Endothelial cell of umbilical vein (primary cell): ENCODE measurements at regions of chr4 and their contacts with region 1.

Region 1: DNA sequence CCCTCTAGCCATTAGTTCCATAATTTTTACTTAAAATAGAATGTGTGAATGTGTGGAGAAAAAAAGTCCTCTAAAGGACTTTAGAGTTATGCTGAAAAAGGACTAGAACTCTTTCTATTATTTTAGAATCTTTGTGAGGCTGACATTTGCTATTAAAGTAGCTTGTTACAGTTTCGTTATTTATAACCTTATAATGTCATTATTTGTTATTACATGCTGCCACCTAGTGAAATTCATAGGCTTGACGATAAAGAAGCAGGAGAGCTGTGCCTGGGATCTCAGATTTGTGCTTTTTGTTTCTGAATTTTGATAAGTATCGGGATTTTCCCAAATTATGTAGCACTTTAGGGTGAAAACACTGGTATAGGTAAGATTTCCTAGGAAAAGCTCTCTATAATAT is 38.5 kb upstream of the TAPT1 start:
- DNase-seq: peak; percentile 58
- H3K4me3 ChIP-seq: no peak overlapping the region
- H3K27ac ChIP-seq: no peak overlapping the region
- H3K4me1 ChIP-seq: no peaks in the 10 kb centered on the region
- H3K27me3 ChIP-seq: peaks cover 0 to 9% of the 10 kb centered on the region in 2 experiments
- CTCF ChIP-seq: peak; percentile 20 to 21
- POLR2A ChIP-seq: no peak

Region 2: DNA sequence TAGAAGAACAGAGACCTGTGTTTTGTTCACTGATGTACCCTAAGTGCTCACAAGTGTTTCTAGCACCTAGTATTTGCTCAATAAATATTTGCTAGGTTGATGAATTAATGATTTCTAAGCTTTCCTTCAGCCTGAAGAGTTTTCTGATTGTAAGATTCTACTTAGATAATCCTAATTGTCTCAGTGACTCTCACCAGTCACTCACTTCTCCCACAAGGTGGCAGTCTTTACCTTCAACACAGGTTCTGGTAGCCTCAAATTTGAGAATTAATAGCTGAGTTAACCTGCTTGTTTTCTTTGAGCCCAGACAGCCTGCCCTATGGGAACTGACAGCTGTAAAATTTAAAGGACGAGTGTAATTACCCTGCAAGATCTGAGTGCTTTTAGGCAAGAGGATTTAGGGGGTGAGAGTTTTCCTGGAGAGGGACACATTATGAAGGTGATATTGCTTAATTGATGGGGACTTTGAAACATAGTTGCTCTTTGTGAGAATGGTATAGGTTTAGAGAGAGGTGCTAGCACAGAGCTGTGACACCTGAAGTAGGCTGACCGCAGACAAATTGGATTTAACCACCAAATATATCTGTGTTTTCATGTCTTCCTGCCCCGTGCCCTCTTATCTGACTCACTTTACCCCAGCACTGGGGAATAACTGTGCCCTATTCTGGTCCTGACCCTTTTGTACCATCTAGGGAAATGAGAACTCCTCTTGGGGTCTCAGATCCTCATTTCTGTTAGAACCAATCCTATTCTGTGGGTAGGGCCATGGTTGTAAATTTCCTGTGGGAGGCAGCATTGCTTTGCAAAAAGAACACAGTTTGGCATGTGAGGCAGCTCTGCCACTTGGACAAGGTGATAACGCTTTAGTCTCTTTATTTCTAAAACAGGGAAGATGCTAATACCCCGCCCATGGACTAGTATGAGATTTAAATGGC is 458.9 kb before region 1 on chr4:
- CTCF ChIA-PET with region 1: interaction called, 21 read pairs
- POLR2A ChIA-PET with region 1: no interaction called
- dilution Hi-C with region 1: no loop called
- intact Hi-C with region 1: loop called (anchors 5 kb)
- DNase-seq: peak; percentile 58
- H3K4me3 ChIP-seq: no peak overlapping the region
- H3K27ac ChIP-seq: no peak overlapping the region
- H3K4me1 ChIP-seq: peaks cover 4% of the 10 kb centered on the region
- H3K27me3 ChIP-seq: peaks cover 15 to 28% of the 10 kb centered on the region in 2 experiments
- CTCF ChIP-seq: peak; percentile 63 to 65
- POLR2A ChIP-seq: no peak

Region 3: DNA sequence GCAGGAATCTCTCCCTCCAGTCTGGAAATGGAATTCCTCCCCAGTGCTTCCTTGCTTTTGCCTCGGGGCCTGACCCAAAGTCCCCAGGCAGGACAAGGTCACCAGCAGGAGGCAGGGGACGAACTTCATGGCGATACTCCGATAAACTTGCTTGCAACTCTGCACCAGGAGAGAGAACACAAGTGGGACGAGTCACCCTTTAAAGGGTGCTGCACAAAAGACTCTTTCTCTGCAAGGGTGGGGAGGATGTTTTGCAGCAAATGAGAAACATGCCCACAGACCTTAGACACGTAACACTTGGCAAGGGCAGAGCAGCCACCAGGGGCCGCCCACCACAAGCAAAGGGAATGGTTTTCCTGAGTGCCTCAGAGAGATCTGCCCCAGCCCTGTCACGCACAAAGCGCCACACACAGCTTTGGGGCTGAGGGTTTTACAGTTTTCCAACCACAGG is 301.8 kb before region 1 on chr4 and contains the start of gene FGFBP2:
- CTCF ChIA-PET with region 1: interaction called, 58 read pairs
- POLR2A ChIA-PET with region 1: no interaction called
- dilution Hi-C with region 1: no loop called
- intact Hi-C with region 1: loop called (anchors 1 kb)
- DNase-seq: peak; percentile 34
- H3K4me3 ChIP-seq: no peak within 1 kb of the TSS
- H3K27ac ChIP-seq: no peak within 1 kb of the TSS
- H3K4me1 ChIP-seq: no peaks in the 10 kb centered on the region
- H3K27me3 ChIP-seq: no peaks in the 10 kb centered on the region
- CTCF ChIP-seq: peak; percentile 22 to 67
- POLR2A ChIP-seq: no peak
- total RNA-seq, gene FGFBP2: not detected in 2 replicates

Region 4: DNA sequence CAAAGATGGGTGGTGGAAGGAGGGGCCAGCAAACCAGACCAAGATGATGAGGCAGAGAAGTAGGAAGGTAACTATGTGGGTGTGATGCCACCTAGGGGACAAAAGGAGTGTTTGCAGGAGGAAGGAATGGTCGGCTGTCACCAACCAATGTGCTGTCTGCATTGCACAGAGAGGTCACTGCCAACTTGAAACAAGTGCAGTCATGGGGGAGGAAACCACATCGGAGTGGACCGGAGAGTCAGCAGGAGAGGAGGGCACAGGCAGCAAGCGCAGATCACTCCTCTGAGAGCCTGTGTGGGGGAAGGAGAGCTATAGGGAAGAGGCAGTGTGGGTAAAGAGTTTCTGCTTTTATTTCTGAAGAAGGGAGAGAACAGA is 263.3 kb before region 1 on chr4:
- CTCF ChIA-PET with region 1: interaction called, 17 read pairs
- POLR2A ChIA-PET with region 1: no interaction called
- dilution Hi-C with region 1: no loop called
- intact Hi-C with region 1: no loop called
- DNase-seq: peak; percentile 73
- H3K4me3 ChIP-seq: no peak overlapping the region
- H3K27ac ChIP-seq: no peak overlapping the region
- H3K4me1 ChIP-seq: no peaks in the 10 kb centered on the region
- H3K27me3 ChIP-seq: peaks cover 6% of the 10 kb centered on the region in 2 experiments
- CTCF ChIP-seq: peak; percentile 78 to 85
- POLR2A ChIP-seq: no peak

Region 5: GRCh38 chr4:16026160-16026761 is 238.5 kb before region 1 on chr4:
- CTCF ChIA-PET with region 1: interaction called, 129 read pairs
- POLR2A ChIA-PET with region 1: no interaction called
- dilution Hi-C with region 1: no loop called
- intact Hi-C with region 1: loop called (anchors 1 kb)
- DNase-seq: peak; percentile 76
- H3K4me3 ChIP-seq: no peak overlapping the region
- H3K27ac ChIP-seq: no peak overlapping the region
- H3K4me1 ChIP-seq: peaks cover 3% of the 10 kb centered on the region
- H3K27me3 ChIP-seq: peaks cover 4 to 11% of the 10 kb centered on the region in 2 experiments
- CTCF ChIP-seq: peak; percentile 48 to 52
- POLR2A ChIP-seq: no peak

Region 6: DNA sequence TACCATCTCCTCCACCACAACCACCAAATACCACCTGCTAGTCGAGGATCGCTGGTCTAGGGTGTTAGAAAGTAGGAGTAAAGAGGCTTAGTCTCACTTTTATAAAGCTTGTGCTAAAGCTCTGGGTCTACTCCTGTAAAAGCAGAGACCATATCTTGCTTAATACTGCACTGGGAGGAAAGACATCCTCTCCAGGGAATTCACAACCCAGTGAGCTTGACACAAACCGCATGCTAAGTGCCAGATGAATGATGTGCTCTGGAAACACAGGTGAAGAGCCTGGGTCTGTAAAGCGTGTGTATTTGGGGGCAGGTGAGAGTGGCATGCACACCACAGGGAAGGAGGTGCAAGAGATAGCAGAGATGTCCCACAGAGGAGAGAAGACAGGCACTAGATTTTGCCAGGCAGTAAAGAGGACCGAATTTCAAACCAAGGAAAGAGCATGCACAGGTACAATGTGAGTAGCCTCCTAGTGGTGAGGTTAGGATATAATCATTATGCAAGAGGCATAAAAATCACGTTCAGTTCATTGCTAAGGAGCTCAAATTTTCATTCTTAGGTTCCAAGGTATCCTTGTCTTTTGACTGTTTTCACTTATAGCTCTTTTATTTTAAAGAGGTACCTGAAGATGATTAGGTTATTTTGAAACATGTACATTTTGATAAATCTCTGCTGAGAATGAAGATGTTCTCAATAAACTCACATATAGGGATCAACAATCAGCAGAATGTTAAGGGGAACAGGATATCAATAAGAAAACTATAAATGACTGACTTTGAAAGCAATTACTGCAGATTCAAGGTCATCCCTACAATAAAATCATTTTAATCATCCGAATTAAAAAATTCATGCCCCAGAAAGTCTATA is 59.3 kb before region 1 on chr4:
- CTCF ChIA-PET with region 1: interaction called, 45 read pairs
- POLR2A ChIA-PET with region 1: no interaction called
- dilution Hi-C with region 1: no loop called
- intact Hi-C with region 1: no loop called
- DNase-seq: peak; percentile 24
- H3K4me3 ChIP-seq: no peak overlapping the region
- H3K27ac ChIP-seq: no peak overlapping the region
- H3K4me1 ChIP-seq: no peaks in the 10 kb centered on the region
- H3K27me3 ChIP-seq: no peaks in the 10 kb centered on the region
- CTCF ChIP-seq: peak; percentile 40 to 54
- POLR2A ChIP-seq: no peak